K562 (cell line): ENCODE measurements at regions of chr19 and their contacts with region 1.

Region 1: DNA sequence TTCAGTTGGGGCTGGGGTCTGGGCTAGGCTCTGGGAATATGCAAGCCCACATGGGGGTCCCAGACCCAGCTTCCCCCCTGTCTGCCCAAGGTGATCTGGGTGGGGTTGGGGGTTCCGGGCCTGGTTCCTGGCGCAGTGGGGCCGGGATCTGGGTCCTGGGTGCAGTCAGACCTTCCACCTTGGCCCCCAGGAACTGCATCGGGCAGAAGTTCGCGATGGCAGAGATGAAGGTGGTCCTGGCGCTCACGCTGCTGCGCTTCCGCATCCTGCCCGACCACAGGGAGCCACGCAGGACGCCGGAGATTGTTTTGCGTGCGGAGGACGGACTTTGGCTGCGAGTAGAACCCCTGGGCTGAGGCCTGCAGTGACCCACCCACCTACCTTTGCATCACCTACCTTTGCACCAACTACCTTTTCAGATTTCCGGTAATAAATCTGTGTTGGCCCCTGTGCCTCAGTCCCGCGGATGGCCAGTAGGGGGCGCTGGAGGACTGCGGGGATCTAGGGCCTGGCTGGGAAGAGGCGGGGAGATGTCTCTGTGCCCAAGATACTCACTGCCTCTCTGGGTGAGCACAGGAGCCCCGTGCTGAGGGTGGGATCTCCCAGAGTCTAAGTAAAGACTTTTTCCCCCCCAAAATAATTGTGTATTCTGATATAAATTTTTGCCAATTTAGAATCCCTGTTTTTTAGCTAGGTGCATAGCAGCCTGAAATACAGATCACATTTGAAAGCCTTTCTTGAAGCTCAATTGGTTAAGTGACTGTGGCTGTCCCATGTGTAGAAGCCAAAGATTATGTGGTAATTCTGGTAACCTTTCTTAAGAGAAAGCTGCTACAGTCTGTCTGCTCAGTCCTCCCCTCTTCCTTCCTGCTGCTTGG is 11.5 kb upstream of the CYP4F3 start:
- DNase-seq: peak; percentile 75 to 85 (median 77)
- ATAC-seq: peak; percentile 94
- H3K4me3 ChIP-seq: no peak overlapping the region
- H3K27ac ChIP-seq: no peak overlapping the region
- H3K4me1 ChIP-seq: peaks cover 0 to 3% of the 10 kb centered on the region in 2 experiments; a peak in 1 of 5 replicates
- H3K27me3 ChIP-seq: no peaks in the 10 kb centered on the region; a peak in 1 of 5 replicates
- CTCF ChIP-seq: peak; percentile 86 to 92 (median 90)
- EP300 ChIP-seq: no peak
- POLR2A ChIP-seq: no peak
- RAD21 ChIP-seq: peak; percentile 87 to 91

Region 2: DNA sequence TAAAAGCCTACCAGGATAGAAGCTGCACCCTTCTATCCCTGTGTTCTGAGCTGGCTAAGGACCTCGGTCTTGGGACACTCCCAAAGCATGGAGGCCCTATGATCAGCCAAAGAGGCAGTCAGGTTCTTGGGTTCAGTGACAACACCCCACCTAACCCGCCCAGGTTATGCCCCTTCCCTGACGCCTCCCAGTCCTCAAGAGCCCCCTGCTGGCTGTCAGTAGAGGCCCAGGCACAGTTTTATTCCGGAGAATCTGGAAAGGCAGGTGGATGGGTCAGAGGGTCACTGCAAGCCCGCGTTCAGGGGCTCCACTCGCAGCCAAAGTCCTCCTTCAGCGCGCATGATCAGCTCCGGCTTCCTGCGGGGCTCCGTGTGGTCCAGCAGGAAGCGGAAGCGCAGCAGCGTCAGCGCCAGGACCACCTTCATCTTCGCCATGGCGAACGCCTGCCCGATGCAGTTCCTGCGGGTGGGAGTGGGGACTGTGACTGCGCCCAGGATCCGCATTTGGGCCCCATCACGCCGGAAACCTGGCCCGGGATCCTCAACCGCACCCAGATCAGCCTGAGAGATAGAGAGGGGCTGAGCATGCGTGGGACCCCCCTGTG is 130.8 kb after region 1 on chr19:
- CTCF ChIA-PET with region 1: no interaction called
- POLR2A ChIA-PET with region 1: no interaction called
- in situ Hi-C with region 1: no loop called
- intact Hi-C with region 1: loop called (anchors 5 kb)
- DNase-seq: peak in 3 of 4 experiments; percentile 21 to 41 (median 32)
- ATAC-seq: peak; percentile 58
- H3K4me3 ChIP-seq: no peak overlapping the region
- H3K27ac ChIP-seq: no peak overlapping the region
- H3K4me1 ChIP-seq: peaks cover 0 to 6% of the 10 kb centered on the region in 2 experiments; a peak in 2 of 5 replicates
- H3K27me3 ChIP-seq: peaks cover 0 to 20% of the 10 kb centered on the region in 2 experiments; a peak in 2 of 5 replicates
- CTCF ChIP-seq: peak; percentile 53 to 55 (median 54)
- EP300 ChIP-seq: no peak
- POLR2A ChIP-seq: no peak
- RAD21 ChIP-seq: peak in 1 of 2 experiments; percentile 32; a peak in 2 of 4 replicates

Region 3: DNA sequence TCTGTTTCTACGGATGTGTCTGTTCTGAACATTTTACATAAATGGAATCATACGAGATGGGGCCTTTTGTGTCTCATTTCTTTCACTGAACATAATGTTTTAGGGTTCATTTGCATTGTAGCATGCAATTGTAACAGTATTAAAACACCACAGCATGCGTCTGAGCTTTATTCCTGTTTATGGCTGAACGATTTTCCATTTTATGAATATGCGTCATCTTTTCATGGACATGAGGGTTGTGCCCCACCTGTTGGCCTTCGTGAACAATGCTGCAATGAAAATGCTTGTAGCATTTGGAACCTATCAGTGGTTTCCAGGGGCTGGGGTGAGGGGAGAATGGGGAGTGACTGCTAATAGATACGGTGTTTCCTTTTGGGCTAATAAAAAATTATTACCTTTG is 181.1 kb after region 1 on chr19:
- CTCF ChIA-PET with region 1: interaction called, 3 read pairs
- POLR2A ChIA-PET with region 1: no interaction called
- in situ Hi-C with region 1: no loop called
- intact Hi-C with region 1: loop called (anchors 1 kb)
- DNase-seq: peak; percentile 29 to 48 (median 46)
- ATAC-seq: peak; percentile 74
- H3K4me3 ChIP-seq: no peak overlapping the region
- H3K27ac ChIP-seq: no peak overlapping the region
- H3K4me1 ChIP-seq: no peaks in the 10 kb centered on the region; a peak in 1 of 5 replicates
- H3K27me3 ChIP-seq: peaks cover 10 to 35% of the 10 kb centered on the region in 2 experiments; a peak in 4 of 5 replicates
- CTCF ChIP-seq: peak; percentile 42 to 69 (median 48)
- EP300 ChIP-seq: no peak
- POLR2A ChIP-seq: no peak
- RAD21 ChIP-seq: peak; percentile 30 to 53; a peak in 3 of 4 replicates

Region 4: GRCh38 chr19:15869109-15869555 is 239.9 kb after region 1 on chr19:
- CTCF ChIA-PET with region 1: interaction called, 18 read pairs
- POLR2A ChIA-PET with region 1: no interaction called
- in situ Hi-C with region 1: loop called (anchors 10 kb)
- intact Hi-C with region 1: loop called (anchors 10 kb)
- DNase-seq: peak; percentile 75 to 88 (median 79)
- ATAC-seq: peak; percentile 97
- H3K4me3 ChIP-seq: no peak overlapping the region
- H3K27ac ChIP-seq: no peak overlapping the region
- H3K4me1 ChIP-seq: peaks cover 8 to 17% of the 10 kb centered on the region in 2 experiments
- H3K27me3 ChIP-seq: peaks cover 0 to 6% of the 10 kb centered on the region in 2 experiments; a peak in 2 of 5 replicates
- CTCF ChIP-seq: peak; percentile 80 to 94 (median 82)
- EP300 ChIP-seq: no peak; the same call in 1 of the 2 replicates
- POLR2A ChIP-seq: no peak
- RAD21 ChIP-seq: peak; percentile 86 to 93

Region 5: DNA sequence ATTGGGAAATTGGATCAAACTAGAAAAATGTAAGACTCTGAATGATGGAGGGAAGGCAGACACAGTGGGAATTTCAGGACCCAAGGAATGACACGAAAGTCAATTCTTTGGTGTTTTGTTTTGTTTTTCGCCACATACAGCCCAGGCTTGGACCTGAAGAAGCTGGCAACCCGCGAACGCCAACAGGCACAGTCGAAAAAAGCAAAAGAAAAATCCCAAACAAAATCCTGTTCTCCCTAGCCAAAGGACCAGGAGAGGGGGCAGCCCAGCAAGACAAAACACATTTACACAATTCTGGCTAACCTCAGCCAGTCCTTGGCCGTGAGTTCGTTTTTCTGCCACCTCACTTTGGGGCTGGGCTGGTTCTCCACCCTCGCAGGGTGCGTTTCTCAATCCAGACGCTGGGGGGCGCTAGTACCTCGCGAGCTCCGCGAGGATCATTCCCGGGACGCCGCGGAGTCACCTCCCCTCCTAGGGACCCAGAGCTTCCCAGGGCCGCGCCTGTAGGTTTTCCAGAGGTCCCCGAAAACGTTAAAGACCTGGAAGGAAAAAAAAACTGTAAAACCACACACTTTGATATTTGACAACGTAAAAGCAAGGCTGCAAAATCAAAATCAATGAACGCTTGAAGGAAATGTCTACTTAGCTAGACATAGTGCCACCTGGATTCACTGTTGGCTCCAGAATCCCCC is 412.2 kb after region 1 on chr19:
- CTCF ChIA-PET with region 1: no interaction called
- POLR2A ChIA-PET with region 1: no interaction called
- in situ Hi-C with region 1: no loop called
- intact Hi-C with region 1: loop called (anchors 10 kb)
- DNase-seq: peak; percentile 77 to 94 (median 90)
- ATAC-seq: peak; percentile 93
- H3K4me3 ChIP-seq: no peak overlapping the region
- H3K27ac ChIP-seq: no peak overlapping the region
- H3K4me1 ChIP-seq: peaks cover 0 to 9% of the 10 kb centered on the region in 2 experiments; a peak in 3 of 5 replicates
- H3K27me3 ChIP-seq: peaks cover 1 to 29% of the 10 kb centered on the region in 2 experiments; a peak in 3 of 5 replicates
- CTCF ChIP-seq: peak; percentile 90 to 95 (median 93)
- EP300 ChIP-seq: no peak
- POLR2A ChIP-seq: no peak
- RAD21 ChIP-seq: peak; percentile 88 to 94

Region 6: DNA sequence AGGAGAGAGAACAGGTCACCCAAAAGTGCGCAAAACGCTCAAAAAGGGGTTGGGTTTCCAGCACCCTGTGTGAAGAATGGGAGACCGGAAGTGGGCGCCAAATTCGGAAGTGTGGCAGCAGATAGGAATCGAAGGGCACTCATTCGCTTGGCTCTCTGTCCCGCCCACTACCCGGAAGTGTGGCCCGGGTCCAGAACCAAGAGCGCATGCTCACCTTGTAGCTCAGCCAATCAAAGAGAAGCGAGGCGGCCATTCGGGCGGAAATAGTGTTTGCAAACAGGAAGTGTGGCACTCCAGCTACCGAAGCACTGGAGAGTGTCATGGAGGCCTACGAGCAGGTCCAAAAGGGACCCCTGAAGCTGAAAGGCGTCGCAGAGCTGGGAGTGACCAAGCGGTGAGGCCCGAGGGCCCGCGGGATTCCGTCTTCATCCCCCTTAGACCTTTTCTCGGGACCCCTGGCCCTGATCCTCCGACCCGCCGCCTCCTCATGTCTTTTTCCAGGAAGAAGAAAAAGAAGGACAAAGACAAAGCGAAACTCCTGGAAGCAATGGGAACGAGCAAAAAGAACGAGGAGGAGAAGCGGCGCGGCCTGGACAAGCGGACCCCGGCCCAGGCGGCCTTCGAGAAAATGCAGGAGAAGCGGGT is 556.0 kb after region 1 on chr19 and contains the start of gene FAM32A:
- CTCF ChIA-PET with region 1: interaction called, 4 read pairs
- POLR2A ChIA-PET with region 1: no interaction called
- in situ Hi-C with region 1: loop called (anchors 5 kb)
- intact Hi-C with region 1: loop called (anchors 1 kb)
- DNase-seq: peak; percentile 99 to 100 (median 99)
- ATAC-seq: peak; percentile 98
- H3K4me3 ChIP-seq: peak within 1 kb of the TSS; percentile 92
- H3K27ac ChIP-seq: peak within 1 kb of the TSS; percentile 75
- H3K4me1 ChIP-seq: peaks cover 0 to 16% of the 10 kb centered on the region in 2 experiments; a peak in 3 of 5 replicates
- H3K27me3 ChIP-seq: no peaks in the 10 kb centered on the region; a peak in 1 of 5 replicates
- CTCF ChIP-seq: no peak; a peak in 1 of 6 replicates
- EP300 ChIP-seq: no peak
- POLR2A ChIP-seq: peak; percentile 86
- RAD21 ChIP-seq: no peak
- polyA plus RNA-seq, gene FAM32A: 30.7 to 43.0 TPM